A673 (cell line): ENCODE measurements at regions of chr11 and their contacts with region 1.

Region 1: GRCh38 chr11:7571640-7572000 is 57.8 kb downstream of the PPFIBP2 start:
- DNase-seq: peak; percentile 70
- H3K4me3 ChIP-seq: no peak overlapping the region
- H3K27ac ChIP-seq: no peak overlapping the region
- H3K4me1 ChIP-seq: peaks cover 17% of the 10 kb centered on the region
- H3K27me3 ChIP-seq: no peaks in the 10 kb centered on the region
- CTCF ChIP-seq: peak; percentile 80

Region 2: GRCh38 chr11:7353100-7353499 is 218.5 kb before region 1 on chr11:
- CTCF ChIA-PET with region 1: no interaction called
- POLR2A ChIA-PET with region 1: interaction called, 4 read pairs
- intact Hi-C with region 1: loop called (anchors 10 kb)
- DNase-seq: peak; percentile 40
- H3K4me3 ChIP-seq: no peak overlapping the region
- H3K27ac ChIP-seq: no peak overlapping the region
- H3K4me1 ChIP-seq: no peaks in the 10 kb centered on the region
- H3K27me3 ChIP-seq: no peaks in the 10 kb centered on the region
- CTCF ChIP-seq: peak; percentile 50

Region 3: GRCh38 chr11:7561562-7561961 is 10.1 kb before region 1 on chr11:
- CTCF ChIA-PET with region 1: no interaction called
- POLR2A ChIA-PET with region 1: no interaction called
- intact Hi-C with region 1: no loop called
- DNase-seq: no peak
- H3K4me3 ChIP-seq: no peak overlapping the region
- H3K27ac ChIP-seq: no peak overlapping the region
- H3K4me1 ChIP-seq: no peaks in the 10 kb centered on the region
- H3K27me3 ChIP-seq: no peaks in the 10 kb centered on the region
- CTCF ChIP-seq: no peak

Region 4: DNA sequence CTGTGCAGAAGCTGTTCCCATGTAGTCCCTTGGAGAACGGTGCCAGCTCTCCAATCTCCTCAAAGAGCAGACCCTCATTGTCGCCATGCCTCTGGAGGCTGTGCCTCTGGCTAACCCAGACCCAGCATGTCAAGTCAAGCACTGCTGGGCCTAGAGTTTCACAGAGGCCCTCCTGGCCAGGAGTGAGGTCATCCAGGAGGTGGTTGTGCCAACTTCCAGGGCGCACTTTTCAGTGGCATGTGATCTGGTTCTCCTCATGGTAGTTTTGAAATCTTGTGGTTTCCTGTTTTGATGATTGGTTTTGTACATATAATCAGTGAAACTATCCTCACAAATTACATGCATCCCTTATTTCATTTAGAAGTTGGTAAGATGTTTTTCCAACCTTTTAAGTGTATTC is 21.1 kb after region 1 on chr11:
- CTCF ChIA-PET with region 1: no interaction called
- POLR2A ChIA-PET with region 1: no interaction called
- intact Hi-C with region 1: no loop called
- DNase-seq: no peak
- H3K4me3 ChIP-seq: no peak overlapping the region
- H3K27ac ChIP-seq: no peak overlapping the region
- H3K4me1 ChIP-seq: peaks cover 17% of the 10 kb centered on the region
- H3K27me3 ChIP-seq: no peaks in the 10 kb centered on the region
- CTCF ChIP-seq: no peak

Region 5: DNA sequence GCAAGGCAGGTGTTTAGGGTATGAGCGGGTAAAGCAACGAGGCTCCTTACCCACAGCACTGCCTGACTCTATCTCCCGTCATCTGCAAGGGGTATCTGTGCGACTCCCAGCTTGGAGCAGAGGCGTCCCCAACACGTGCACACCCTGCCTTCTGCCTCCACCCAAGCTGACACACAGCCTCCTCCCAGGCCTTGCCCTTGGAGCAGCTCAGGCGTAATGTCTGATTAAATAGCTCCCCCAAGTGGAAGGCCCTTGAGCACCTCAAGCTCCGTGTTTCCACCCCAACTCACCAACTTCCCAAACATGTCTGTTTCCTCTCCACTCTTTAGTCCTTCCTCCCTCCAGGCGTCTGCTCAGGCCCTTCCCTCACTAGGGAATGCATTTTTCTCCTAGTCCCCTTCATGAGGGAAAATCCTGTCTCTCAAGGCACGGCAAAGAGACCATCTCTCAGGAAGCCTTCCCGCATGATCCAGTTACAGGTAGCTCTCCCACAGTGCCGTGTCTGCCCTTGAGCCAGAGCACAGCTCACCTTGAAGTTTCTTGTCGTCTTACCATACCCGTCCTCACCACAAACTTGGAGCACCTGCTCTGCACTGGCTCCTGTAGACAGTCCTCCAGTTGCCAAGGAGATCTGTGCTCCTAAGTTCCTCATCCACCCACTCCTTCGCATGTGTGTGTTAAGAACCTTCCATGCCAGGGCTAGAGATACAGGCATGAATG is 85.8 kb after region 1 on chr11:
- CTCF ChIA-PET with region 1: interaction called, 25 read pairs
- POLR2A ChIA-PET with region 1: no interaction called
- intact Hi-C with region 1: loop called (anchors 2 kb)
- DNase-seq: peak; percentile 59
- H3K4me3 ChIP-seq: no peak overlapping the region
- H3K27ac ChIP-seq: no peak overlapping the region
- H3K4me1 ChIP-seq: no peaks in the 10 kb centered on the region
- H3K27me3 ChIP-seq: no peaks in the 10 kb centered on the region
- CTCF ChIP-seq: peak; percentile 51

Region 6: DNA sequence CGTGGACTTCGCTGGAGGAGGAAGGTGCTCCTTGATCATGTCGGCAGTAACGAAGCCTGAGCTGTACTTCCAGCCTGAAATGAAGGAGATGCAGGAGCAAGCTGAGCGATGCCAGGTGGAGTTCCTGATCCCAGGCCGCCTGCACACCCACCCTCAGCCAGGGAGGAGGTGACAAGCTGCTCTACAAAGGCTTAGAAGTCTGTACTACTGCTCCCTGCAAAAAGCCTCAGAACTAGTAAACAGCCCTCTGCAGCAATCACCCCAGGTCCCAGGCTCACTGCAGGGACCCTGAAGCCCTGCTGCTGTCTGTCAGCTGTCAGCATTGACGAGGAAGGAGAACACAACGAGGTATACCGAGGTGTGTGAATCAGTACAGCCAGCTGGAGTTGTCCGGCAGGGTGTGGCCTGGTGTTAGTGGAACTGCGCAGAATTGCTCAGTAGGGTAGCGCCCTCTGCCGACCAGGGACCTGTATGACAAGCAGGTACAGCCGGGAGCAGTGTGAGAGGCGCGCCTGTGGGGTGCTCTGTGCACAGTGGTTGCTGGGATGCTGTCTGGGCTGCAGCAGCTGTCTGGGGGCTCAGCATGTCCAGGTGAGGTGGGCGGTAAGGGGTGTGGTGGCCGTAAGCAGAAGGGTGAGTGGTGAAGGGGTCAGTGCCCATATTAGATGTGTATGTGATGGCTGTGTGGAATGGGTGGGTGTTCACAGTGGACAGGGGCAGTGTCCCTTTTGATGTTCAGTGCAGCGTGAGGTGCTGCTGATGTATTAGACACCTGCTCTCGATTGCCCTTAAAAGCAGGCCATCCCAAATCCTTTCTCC is 94.1 kb after region 1 on chr11:
- CTCF ChIA-PET with region 1: interaction called, 5 read pairs
- POLR2A ChIA-PET with region 1: no interaction called
- intact Hi-C with region 1: loop called (anchors 1 kb)
- DNase-seq: peak; percentile 57
- H3K4me3 ChIP-seq: no peak overlapping the region
- H3K27ac ChIP-seq: no peak overlapping the region
- H3K4me1 ChIP-seq: no peaks in the 10 kb centered on the region
- H3K27me3 ChIP-seq: no peaks in the 10 kb centered on the region
- CTCF ChIP-seq: peak; percentile 88

Region 7: DNA sequence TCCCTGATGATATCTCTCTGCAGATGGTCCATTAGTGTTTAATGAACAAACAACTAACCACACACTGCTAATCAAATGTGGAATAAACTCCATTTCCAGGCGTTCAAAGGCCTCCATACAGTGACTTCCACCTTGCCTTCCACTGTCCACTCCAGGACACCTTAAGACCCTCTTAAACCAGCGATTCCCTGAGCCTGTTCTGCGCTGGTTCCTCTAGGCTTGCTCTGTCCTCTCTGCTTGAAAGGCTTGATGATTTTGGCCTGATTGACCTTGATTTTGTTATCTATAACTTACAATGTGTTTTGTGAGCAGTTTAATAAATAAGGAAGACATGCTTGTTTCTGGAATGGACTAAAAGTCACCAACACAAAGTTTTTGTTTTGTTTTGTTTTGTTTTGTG is 122.6 kb after region 1 on chr11:
- CTCF ChIA-PET with region 1: interaction called, 14 read pairs
- POLR2A ChIA-PET with region 1: no interaction called
- intact Hi-C with region 1: no loop called
- DNase-seq: no peak
- H3K4me3 ChIP-seq: no peak overlapping the region
- H3K27ac ChIP-seq: no peak overlapping the region
- H3K4me1 ChIP-seq: no peaks in the 10 kb centered on the region
- H3K27me3 ChIP-seq: peaks cover 26% of the 10 kb centered on the region
- CTCF ChIP-seq: no peak